Posterior vena cava (tissue), 2 donors: ENCODE measurements at regions of chr1 and their contacts with region 1.

Region 1: GRCh38 chr1:165954940-165955339 is 127.5 kb downstream of the UCK2 start:
- DNase-seq: no peak

Region 2: GRCh38 chr1:166029196-166029945 is 74.4 kb after region 1 on chr1:
- intact Hi-C with region 1: loop called in 1 of 2 experiments (anchors 2 kb)
- DNase-seq: no peak